ENCODE measurements at regions of chr14 and their contacts with region 1.

Region 1: GRCh38 chr14:54773171-54773975 is 129.3 kb downstream of the GCH1 start:
- DNase-seq: peak; percentile 21 to 83 (median 58)
- ATAC-seq: peak; percentile 78
- H3K4me3 ChIP-seq: peak overlapping the region; percentile 14
- H3K4me3 Mint-ChIP-seq: peak overlapping the region in 9 of 10 donors; percentile 15 to 80 (median 71)
- H3K27ac ChIP-seq: peak overlapping the region; percentile 14
- H3K27ac Mint-ChIP-seq: peak overlapping the region; percentile 24 to 88 (median 77)
- H3K4me1 ChIP-seq: peaks cover 4 to 27% of the 10 kb centered on the region in 2 donors
- H3K4me1 Mint-ChIP-seq: peaks cover 19 to 42% (median 23%) of the 10 kb centered on the region in 7 donors
- H3K27me3 ChIP-seq: no peaks in the 10 kb centered on the region
- H3K27me3 Mint-ChIP-seq: peaks cover 0 to 31% (median 10%) of the 10 kb centered on the region in 5 donors

Region 2: GRCh38 chr14:54094765-54095164 is 678.6 kb before region 1 on chr14:
- CTCF ChIA-PET with region 1: no interaction called
- POLR2A ChIA-PET with region 1: no interaction called
- intact Hi-C with region 1: no loop called
- DNase-seq: no peak
- ATAC-seq: no peak
- H3K4me3 ChIP-seq: no peak overlapping the region
- H3K4me3 Mint-ChIP-seq: no peak overlapping the region
- H3K27ac ChIP-seq: no peak overlapping the region
- H3K27ac Mint-ChIP-seq: no peak overlapping the region
- H3K4me1 ChIP-seq: no peaks in the 10 kb centered on the region
- H3K4me1 Mint-ChIP-seq: no peaks in the 10 kb centered on the region
- H3K27me3 ChIP-seq: no peaks in the 10 kb centered on the region
- H3K27me3 Mint-ChIP-seq: peaks cover 0 to 12% (median 5%) of the 10 kb centered on the region in 5 donors

Region 3: DNA sequence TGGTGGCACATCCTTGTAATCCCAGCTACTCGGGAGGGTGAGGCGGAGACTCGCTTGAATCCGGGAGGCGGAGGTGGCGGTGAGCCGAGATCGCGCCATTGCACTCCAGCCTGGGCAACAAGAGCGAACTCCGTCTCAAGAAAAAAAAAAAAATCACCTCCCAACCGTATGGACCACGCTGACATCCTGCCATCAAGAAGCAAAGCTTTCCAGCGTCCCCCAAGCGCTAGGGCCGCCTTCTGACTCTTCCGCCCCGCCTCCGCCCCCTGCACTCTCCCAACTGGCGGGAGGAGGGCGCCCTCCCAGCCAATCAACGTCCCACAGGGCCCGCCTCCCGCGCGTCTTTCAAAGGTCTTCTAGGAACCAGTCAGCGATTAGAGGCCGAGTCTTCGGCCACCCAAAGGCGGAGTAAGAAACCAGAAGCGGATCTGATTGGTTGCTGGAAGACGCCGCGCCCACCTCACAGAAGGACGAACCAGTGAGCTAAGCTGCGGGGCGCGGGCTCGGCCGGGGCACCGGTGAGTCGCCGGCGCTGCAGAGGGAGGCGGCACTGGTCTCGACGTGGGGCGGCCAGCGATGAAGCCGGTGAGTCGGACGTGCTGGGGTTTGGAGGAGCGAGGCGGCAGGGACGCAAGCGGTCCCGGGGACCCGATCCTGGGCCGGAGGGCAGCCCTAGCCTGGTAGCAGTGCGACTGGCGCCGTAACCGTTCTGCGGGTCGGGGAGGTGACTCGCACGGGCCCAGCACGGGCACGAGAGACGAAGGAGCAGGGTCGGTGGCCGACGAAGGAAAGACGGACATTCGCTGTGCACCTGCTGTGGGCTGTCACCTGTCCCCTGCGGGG is 376.7 kb before region 1 on chr14 and contains the start of gene CDKN3:
- CTCF ChIA-PET with region 1: no interaction called
- POLR2A ChIA-PET with region 1: no interaction called
- intact Hi-C with region 1: loop called in 1 of 2 experiments (anchors 2 kb)
- DNase-seq: peak; percentile 91 to 96 (median 95)
- ATAC-seq: peak; percentile 98
- H3K4me3 ChIP-seq: peak within 1 kb of the TSS; percentile 85
- H3K4me3 Mint-ChIP-seq: peak within 1 kb of the TSS; percentile 81 to 96 (median 90)
- H3K27ac ChIP-seq: peak within 1 kb of the TSS; percentile 46
- H3K27ac Mint-ChIP-seq: peak within 1 kb of the TSS; percentile 24 to 93 (median 83)
- H3K4me1 ChIP-seq: peaks cover 0 to 9% of the 10 kb centered on the region in 2 donors
- H3K4me1 Mint-ChIP-seq: peaks cover 0 to 38% (median 12%) of the 10 kb centered on the region in 7 donors
- H3K27me3 ChIP-seq: no peaks in the 10 kb centered on the region
- H3K27me3 Mint-ChIP-seq: peaks cover 0 to 2% (median 0%) of the 10 kb centered on the region in 5 donors
- total RNA-seq, gene CDKN3: 0.93 to 48.1 (median 3.0) TPM

Region 4: DNA sequence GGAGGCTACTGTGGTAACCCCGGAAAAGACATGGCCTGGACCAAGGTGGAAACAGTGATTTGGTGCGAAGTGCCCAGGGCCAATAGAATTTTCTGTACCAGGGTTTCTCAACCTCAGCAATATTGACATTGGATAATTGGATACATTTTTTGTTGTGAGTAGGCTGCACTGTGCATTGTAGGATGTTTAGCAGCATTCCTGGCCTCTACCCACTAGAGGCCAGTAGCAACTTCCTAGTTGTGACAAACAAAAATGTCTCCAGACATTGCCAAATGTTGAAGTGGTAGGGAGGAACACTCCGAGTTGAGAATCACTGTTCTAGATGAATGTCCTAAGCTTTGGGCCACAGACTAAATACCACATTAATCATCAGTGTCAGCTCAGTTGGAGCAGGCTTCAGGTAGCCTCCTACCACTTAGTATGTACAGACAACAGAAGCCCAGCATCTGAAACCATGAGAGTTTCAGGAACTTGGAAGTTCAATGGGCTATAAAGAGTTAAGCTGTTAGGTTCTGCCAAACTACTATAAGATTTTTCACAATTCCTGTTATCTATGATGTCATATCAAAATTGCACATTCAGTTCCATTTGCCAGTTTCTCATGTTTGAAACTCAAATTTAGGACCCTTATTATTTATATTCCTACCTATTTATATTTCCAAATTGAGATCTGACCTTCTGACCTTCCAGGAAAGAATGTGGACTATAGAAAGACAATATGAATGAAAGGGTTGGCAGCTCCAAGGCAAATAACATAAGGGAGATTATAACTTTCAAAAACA is 269.7 kb before region 1 on chr14:
- CTCF ChIA-PET with region 1: no interaction called
- POLR2A ChIA-PET with region 1: no interaction called
- intact Hi-C with region 1: loop called in 1 of 2 experiments (anchors 1 kb)
- DNase-seq: no peak
- ATAC-seq: peak; percentile 59
- H3K4me3 ChIP-seq: no peak overlapping the region
- H3K4me3 Mint-ChIP-seq: no peak overlapping the region
- H3K27ac ChIP-seq: no peak overlapping the region
- H3K27ac Mint-ChIP-seq: no peak overlapping the region
- H3K4me1 ChIP-seq: no peaks in the 10 kb centered on the region
- H3K4me1 Mint-ChIP-seq: peaks cover 0 to 1% (median under 1%) of the 10 kb centered on the region in 7 donors
- H3K27me3 ChIP-seq: no peaks in the 10 kb centered on the region
- H3K27me3 Mint-ChIP-seq: peaks cover 0 to 36% (median 8%) of the 10 kb centered on the region in 5 donors

Region 5: DNA sequence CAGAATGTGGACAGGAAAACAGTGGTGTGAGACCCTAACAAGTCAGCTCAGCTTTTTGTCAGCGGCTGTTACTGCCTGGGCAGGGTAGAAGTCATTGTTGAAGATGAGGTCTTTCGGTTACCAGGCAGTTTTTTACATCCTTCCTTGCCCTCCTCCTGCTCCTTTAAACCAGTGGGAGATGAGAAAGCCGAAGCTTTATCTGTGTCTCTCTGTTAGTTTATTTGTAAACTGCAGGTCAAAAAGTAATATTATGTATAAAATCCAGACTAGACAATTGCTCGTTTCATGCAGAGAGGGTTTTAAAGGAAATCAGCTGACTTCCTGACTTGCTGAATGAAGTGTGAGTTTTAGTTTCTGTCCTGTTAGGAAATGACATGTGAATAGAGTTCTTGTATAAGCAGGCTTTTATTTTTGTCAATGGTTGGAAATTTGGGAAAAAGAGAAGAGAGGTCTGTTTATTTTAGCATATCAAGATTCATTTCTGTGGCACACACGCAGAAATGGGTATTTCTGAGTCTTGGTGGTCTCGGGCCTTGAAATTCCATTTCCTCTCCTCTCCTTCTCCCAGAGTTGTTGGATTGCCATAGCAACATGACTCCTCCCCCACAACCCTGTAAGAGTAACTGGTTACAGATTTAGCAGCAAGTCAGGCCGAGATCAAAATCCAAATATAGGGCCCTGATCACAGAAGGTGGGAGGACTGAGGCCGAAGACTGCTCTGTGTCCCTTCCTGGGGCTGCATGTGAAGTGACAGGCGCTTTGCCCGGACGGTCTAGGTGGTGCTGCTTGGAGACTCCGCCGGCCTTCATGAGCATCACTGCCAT is 145.6 kb before region 1 on chr14:
- CTCF ChIA-PET with region 1: no interaction called
- POLR2A ChIA-PET with region 1: no interaction called
- intact Hi-C with region 1: loop called (anchors 1 to 5 kb)
- DNase-seq: peak in 7 of 9 donors; percentile 30 to 59 (median 44)
- ATAC-seq: peak; percentile 81
- H3K4me3 ChIP-seq: peak overlapping the region; percentile 14
- H3K4me3 Mint-ChIP-seq: peak overlapping the region; percentile 70 to 87 (median 82)
- H3K27ac ChIP-seq: peak overlapping the region; percentile 67
- H3K27ac Mint-ChIP-seq: peak overlapping the region; percentile 86 to 93 (median 92)
- H3K4me1 ChIP-seq: peaks cover 32 to 39% of the 10 kb centered on the region in 2 donors
- H3K4me1 Mint-ChIP-seq: peaks cover 34 to 51% (median 42%) of the 10 kb centered on the region in 7 donors
- H3K27me3 ChIP-seq: no peaks in the 10 kb centered on the region
- H3K27me3 Mint-ChIP-seq: no peaks in the 10 kb centered on the region

Region 6: GRCh38 chr14:54730156-54730961 is 43.0 kb before region 1 on chr14:
- CTCF ChIA-PET with region 1: no interaction called
- POLR2A ChIA-PET with region 1: no interaction called
- intact Hi-C with region 1: loop called in 1 of 2 experiments (anchors 1 kb)
- DNase-seq: peak in 3 of 9 donors; percentile 1 to 46 (median 16)
- ATAC-seq: peak; percentile 75
- H3K4me3 ChIP-seq: peak overlapping the region; percentile 1
- H3K4me3 Mint-ChIP-seq: peak overlapping the region; percentile 27 to 77 (median 70)
- H3K27ac ChIP-seq: no peak overlapping the region
- H3K27ac Mint-ChIP-seq: peak overlapping the region in 7 of 9 donors; percentile 4 to 85 (median 28)
- H3K4me1 ChIP-seq: peaks cover 0 to 6% of the 10 kb centered on the region in 2 donors
- H3K4me1 Mint-ChIP-seq: peaks cover 8 to 43% (median 19%) of the 10 kb centered on the region in 7 donors
- H3K27me3 ChIP-seq: peaks cover 0 to 3% of the 10 kb centered on the region in 2 donors
- H3K27me3 Mint-ChIP-seq: peaks cover 0 to 41% (median 9%) of the 10 kb centered on the region in 5 donors

Region 7: DNA sequence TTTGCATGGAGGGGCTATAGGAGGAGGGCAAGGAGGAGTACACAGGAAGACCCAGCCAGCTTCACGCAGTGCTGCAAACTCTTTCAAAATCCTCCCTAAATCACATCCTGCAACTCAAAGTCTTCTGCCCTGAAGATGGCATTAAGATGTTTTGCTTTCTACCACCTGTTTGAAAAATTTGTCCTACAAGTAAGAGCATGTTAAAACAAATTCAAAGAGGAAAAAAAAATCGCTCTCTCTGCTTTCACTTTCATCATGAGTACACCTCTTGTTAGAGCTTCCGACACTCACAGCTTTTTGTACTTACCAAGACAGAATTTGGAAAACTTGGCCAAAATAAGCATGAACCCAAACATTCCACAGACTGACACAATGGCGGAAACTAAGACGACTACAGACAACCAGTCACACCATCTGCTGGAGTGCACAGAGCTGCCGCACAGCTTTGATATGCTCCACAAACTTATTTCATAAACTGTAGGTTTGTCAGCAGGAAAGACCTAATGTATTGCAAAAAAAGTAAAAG is 107.9 kb after region 1 on chr14:
- CTCF ChIA-PET with region 1: interaction called, 3 read pairs
- POLR2A ChIA-PET with region 1: no interaction called
- intact Hi-C with region 1: loop called in 1 of 2 experiments (anchors 5 kb)
- DNase-seq: peak in 7 of 9 donors; percentile 55 to 74 (median 72)
- ATAC-seq: peak; percentile 77
- H3K4me3 ChIP-seq: peak overlapping the region; percentile 70
- H3K4me3 Mint-ChIP-seq: peak overlapping the region; percentile 85 to 97 (median 90)
- H3K27ac ChIP-seq: peak overlapping the region; percentile 79
- H3K27ac Mint-ChIP-seq: peak overlapping the region; percentile 90 to 99 (median 96)
- H3K4me1 ChIP-seq: peaks cover 7 to 17% of the 10 kb centered on the region in 2 donors
- H3K4me1 Mint-ChIP-seq: peaks cover 28 to 66% (median 60%) of the 10 kb centered on the region in 7 donors
- H3K27me3 ChIP-seq: no peaks in the 10 kb centered on the region
- H3K27me3 Mint-ChIP-seq: no peaks in the 10 kb centered on the region

Measured in naive thymus-derived CD4-positive, alpha-beta T cell (primary cell).